SK-N-SH (cell line): ENCODE measurements at regions of chr7 and their contacts with region 1.

Region 1: DNA sequence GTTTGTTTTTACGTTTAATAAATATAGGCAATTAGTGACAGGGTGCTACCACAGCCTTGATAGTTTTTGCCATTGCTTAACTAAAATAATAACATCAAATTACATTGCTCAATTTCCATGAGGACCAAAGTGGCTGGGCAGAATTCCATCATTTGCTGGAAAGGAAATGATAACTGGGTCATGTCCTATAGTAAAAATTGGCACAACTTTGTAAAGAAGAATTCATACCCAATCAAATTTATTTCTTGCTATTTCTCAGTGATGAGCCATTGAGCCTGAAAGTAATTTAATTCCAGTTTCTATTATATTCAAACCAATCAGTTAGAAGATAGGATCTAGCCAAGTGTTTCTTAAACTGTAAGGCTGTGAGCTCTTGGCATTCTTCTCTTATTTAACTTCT is 102.2 kb upstream of the CTTNBP2 start:
- DNase-seq: no peak
- H3K4me3 ChIP-seq: no peak overlapping the region
- H3K27ac ChIP-seq: no peak overlapping the region
- H3K4me1 ChIP-seq: peaks cover 0 to 5% of the 10 kb centered on the region in 2 experiments; a peak in 1 of 4 replicates
- H3K27me3 ChIP-seq: no peaks in the 10 kb centered on the region
- CTCF ChIP-seq: no peak
- EP300 ChIP-seq: no peak
- RAD21 ChIP-seq: no peak

Region 2: GRCh38 chr7:117907049-117907640 is 68.3 kb before region 1 on chr7:
- CTCF ChIA-PET with region 1: no interaction called
- POLR2A ChIA-PET with region 1: no interaction called
- DNase-seq: no peak
- H3K4me3 ChIP-seq: no peak overlapping the region
- H3K27ac ChIP-seq: no peak overlapping the region
- H3K4me1 ChIP-seq: no peaks in the 10 kb centered on the region
- H3K27me3 ChIP-seq: no peaks in the 10 kb centered on the region
- CTCF ChIP-seq: no peak
- EP300 ChIP-seq: no peak
- RAD21 ChIP-seq: no peak

Region 3: DNA sequence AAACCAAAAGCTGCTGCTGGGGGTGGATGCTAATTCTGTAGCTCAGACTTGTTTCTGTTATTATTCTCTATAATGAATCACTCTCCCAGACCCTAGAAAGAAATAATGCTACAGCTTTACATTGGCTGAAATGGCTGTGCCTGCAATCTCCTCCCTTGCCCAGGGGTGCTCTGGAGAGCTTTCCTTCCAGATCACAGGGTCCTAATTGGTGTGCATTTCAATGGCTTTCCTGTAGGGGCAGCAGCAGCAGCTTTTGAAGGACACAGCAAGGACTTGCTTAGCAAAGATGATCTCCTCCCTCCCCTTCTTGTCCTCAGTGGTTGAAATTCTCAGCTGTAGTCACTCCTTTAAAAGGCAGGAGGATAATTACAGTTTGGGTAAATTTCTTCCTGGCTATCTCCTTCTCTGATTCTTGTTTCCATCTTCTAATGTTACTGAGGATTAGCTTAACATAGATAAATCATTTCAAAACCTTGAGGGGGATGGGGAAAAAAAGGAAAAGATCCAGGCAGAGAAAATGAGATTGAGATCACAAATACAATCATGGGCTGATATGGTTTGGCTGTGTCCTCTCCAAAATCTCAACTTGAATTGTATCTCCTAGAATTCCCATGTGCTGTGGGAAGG is 18.0 kb after region 1 on chr7:
- CTCF ChIA-PET with region 1: interaction called, 15 read pairs
- POLR2A ChIA-PET with region 1: no interaction called
- DNase-seq: peak; percentile 42
- H3K4me3 ChIP-seq: no peak overlapping the region
- H3K27ac ChIP-seq: no peak overlapping the region
- H3K4me1 ChIP-seq: no peaks in the 10 kb centered on the region
- H3K27me3 ChIP-seq: no peaks in the 10 kb centered on the region
- CTCF ChIP-seq: peak; percentile 67
- EP300 ChIP-seq: no peak
- RAD21 ChIP-seq: peak; percentile 33

Region 4: GRCh38 chr7:118264836-118265235 is 289.4 kb after region 1 on chr7:
- CTCF ChIA-PET with region 1: no interaction called
- POLR2A ChIA-PET with region 1: no interaction called
- DNase-seq: no peak
- H3K4me3 ChIP-seq: no peak overlapping the region
- H3K27ac ChIP-seq: no peak overlapping the region
- H3K4me1 ChIP-seq: no peaks in the 10 kb centered on the region
- H3K27me3 ChIP-seq: no peaks in the 10 kb centered on the region
- CTCF ChIP-seq: no peak
- EP300 ChIP-seq: no peak
- RAD21 ChIP-seq: no peak

Region 5: DNA sequence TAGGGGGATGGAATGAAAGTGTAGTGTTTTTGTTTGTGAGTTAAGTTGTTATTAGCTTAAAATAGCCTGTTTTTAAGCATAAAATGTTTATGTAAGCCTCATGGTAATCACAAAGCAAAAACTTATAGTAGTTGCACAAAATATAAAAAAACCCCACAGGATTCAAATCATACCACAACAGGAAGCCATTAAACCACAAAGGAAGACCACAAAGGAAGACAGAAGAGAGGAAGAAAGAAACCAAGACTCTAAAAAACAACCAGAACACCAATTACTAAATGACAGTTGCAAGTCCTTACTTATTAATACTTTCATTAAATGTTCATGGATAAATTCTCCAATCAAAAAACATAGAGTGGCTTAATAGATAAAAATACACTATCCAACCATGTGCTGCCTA is 312.6 kb after region 1 on chr7:
- CTCF ChIA-PET with region 1: no interaction called
- POLR2A ChIA-PET with region 1: no interaction called
- DNase-seq: no peak
- H3K4me3 ChIP-seq: no peak overlapping the region
- H3K27ac ChIP-seq: no peak overlapping the region
- H3K4me1 ChIP-seq: no peaks in the 10 kb centered on the region
- H3K27me3 ChIP-seq: no peaks in the 10 kb centered on the region
- CTCF ChIP-seq: no peak
- EP300 ChIP-seq: no peak
- RAD21 ChIP-seq: no peak